ENCODE measurements at regions of chr7 and their contacts with region 1.

Region 1: DNA sequence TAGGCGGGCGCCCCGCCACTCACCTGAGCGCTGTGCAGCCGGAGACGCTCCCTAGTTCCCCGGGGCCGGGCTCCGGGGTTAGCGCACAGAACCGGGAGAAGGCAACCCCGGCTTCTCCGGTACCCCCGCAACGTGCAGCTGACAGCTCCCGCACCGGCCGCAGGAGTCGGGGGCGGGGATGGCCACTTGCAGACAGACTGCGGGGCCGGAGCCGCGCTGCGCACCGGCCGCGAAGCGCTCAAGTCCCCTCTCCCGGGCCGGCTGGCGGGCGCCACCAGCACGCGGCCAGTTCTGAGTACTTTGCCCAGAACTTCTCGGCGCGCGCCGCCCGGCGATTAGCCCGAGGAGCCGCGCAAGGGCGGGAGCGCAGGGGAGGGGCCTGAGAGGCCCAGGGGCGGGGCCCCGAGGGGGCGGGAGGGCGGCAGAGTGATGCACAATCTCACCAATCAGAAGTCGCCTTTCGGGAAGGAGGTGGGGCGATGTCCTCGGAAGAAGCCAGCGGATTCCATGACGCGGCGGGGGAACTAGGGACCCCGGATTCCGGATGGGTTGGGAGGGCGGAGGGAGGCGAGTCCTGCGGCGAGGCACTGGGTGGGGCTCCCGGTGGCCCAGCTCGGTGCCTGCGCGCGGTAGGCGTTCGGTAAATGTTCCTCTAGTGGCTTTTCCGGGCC is at the start of gene OSBPL3:
- DNase-seq: peak; percentile 96
- ATAC-seq: peak; percentile 84
- H3K4me3 Mint-ChIP-seq: peak within 1 kb of the TSS; percentile 90
- H3K27ac Mint-ChIP-seq: peak within 1 kb of the TSS; percentile 93
- H3K4me1 Mint-ChIP-seq: peaks cover 53% of the 10 kb centered on the region
- H3K27me3 Mint-ChIP-seq: no peaks in the 10 kb centered on the region
- total RNA-seq, gene OSBPL3: 34.7 to 38.2 TPM

Region 2: DNA sequence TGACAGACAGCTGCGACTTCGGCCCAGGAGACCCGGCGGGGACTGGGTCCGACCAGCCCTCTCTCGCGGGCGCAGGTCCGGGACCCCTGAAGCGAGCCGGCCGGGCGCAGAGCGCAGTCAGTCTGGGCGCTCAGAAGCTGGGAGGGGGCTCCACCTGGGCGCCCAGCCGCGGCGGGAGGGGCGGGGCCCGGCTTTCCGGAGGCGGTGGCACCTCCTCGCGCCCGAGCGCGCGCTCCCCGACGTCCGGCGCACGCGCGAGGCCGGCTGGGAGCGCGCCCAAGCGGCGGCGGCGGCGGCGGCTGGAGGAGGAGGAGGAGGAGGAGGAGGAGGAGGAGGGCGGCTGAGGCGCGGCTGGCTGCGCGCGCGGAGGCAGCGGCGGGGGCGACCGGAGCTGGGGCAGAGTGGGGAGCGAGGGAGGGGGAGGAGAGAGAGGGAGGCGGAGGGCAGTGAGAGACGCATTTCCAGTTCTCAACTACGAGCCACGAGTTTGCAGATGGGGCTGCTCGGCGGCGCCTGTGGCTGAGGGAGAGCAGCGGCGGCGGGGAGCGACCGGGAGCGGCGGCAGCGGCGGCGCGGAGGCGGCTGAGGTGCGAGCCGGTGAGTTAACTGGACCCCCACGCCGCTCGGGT is 406.9 kb before region 1 on chr7 and contains the start of gene PALS2:
- CTCF ChIA-PET with region 1: interaction called, 3 read pairs
- POLR2A ChIA-PET with region 1: no interaction called
- intact Hi-C with region 1: loop called in 1 of 2 experiments (anchors 1 kb)
- DNase-seq: peak; percentile 86
- ATAC-seq: peak; percentile 68
- H3K4me3 Mint-ChIP-seq: peak within 1 kb of the TSS; percentile 88
- H3K27ac Mint-ChIP-seq: peak within 1 kb of the TSS; percentile 86
- H3K4me1 Mint-ChIP-seq: peaks cover 34% of the 10 kb centered on the region
- H3K27me3 Mint-ChIP-seq: peaks cover 12% of the 10 kb centered on the region
- total RNA-seq, gene PALS2: 20.8 to 41.7 TPM

Region 3: DNA sequence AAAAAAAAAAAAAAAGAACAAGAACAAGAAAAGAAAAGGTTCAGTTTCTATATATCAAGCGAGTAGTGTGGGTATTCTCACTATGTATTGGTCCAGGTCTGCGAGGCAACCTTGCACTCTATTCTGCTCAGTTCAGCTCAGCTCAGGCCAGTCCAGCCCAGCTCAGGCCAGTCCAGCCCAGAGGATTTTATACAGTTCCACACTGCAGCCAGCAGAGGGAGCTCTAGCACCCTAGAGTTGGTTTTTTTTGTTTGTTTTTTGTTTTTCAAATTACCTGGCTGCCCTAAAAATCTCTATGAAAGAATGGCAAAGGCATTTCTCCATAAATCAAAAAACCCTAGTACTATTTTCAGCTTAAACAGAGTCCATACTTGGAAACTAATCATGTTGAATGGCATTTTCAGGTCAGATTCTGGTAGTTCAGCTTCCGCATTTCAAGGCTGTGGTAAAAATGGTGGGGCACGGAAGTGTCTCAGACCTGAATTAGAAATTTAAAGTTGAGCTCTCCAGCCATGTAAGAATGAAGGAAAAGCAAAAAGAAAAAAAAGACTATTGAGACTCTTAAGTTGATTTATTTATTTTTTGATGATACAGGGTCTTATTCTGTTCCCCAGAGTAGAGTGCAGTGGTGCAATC is 167.6 kb before region 1 on chr7:
- CTCF ChIA-PET with region 1: interaction called, 11 read pairs
- POLR2A ChIA-PET with region 1: no interaction called
- intact Hi-C with region 1: no loop called
- DNase-seq: peak; percentile 68
- ATAC-seq: peak; percentile 69
- H3K4me3 Mint-ChIP-seq: no peak overlapping the region
- H3K27ac Mint-ChIP-seq: no peak overlapping the region
- H3K4me1 Mint-ChIP-seq: no peaks in the 10 kb centered on the region
- H3K27me3 Mint-ChIP-seq: no peaks in the 10 kb centered on the region

Region 4: GRCh38 chr7:24907311-24907886 is 72.6 kb before region 1 on chr7:
- CTCF ChIA-PET with region 1: interaction called, 3 read pairs
- POLR2A ChIA-PET with region 1: no interaction called
- intact Hi-C with region 1: loop called (anchors 1 kb)
- DNase-seq: peak; percentile 47
- ATAC-seq: peak; percentile 85
- H3K4me3 Mint-ChIP-seq: no peak overlapping the region
- H3K27ac Mint-ChIP-seq: no peak overlapping the region
- H3K4me1 Mint-ChIP-seq: peaks cover 43% of the 10 kb centered on the region
- H3K27me3 Mint-ChIP-seq: no peaks in the 10 kb centered on the region

Region 5: GRCh38 chr7:25028370-25029021 is 48.5 kb after region 1 on chr7:
- CTCF ChIA-PET with region 1: interaction called, 4 read pairs
- POLR2A ChIA-PET with region 1: no interaction called
- intact Hi-C with region 1: loop called (anchors 1 to 2 kb)
- DNase-seq: peak; percentile 50
- ATAC-seq: peak; percentile 89
- H3K4me3 Mint-ChIP-seq: peak overlapping the region; percentile 41
- H3K27ac Mint-ChIP-seq: peak overlapping the region; percentile 87
- H3K4me1 Mint-ChIP-seq: peaks cover 46% of the 10 kb centered on the region
- H3K27me3 Mint-ChIP-seq: no peaks in the 10 kb centered on the region

Region 6: DNA sequence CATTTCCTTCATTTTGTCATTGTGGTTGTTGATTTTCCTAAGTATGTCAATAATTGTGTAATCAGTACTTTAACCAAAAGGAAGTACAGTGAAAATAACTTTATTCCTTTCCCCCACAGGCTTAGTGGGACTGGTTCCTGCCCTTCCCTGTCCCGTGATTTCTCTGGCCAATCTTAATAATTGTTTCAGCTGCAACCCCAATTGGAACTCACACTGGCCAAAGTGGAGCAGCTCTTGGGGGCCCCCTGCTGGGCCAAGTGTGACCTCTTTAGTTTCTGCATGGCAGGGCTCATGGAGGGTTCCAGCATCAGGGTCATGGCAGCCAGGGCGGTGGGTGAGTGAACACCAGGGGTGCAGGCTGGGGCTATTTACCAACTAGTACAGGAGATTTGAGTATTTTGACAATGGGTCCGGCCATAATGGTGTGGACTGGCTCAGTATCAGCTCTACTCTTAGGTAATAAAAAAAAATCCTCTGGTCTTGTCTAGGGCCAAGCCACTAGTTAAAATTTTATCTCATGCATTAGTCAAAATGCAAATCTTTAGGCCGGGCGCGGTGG is 113.3 kb after region 1 on chr7:
- CTCF ChIA-PET with region 1: interaction called, 13 read pairs
- POLR2A ChIA-PET with region 1: no interaction called
- intact Hi-C with region 1: loop called in 1 of 2 experiments (anchors 1 kb)
- DNase-seq: peak; percentile 90
- ATAC-seq: peak; percentile 91
- H3K4me3 Mint-ChIP-seq: no peak overlapping the region
- H3K27ac Mint-ChIP-seq: no peak overlapping the region
- H3K4me1 Mint-ChIP-seq: peaks cover 12% of the 10 kb centered on the region
- H3K27me3 Mint-ChIP-seq: peaks cover 2% of the 10 kb centered on the region

Region 7: GRCh38 chr7:25179771-25180591 is 200.0 kb after region 1 on chr7:
- CTCF ChIA-PET with region 1: interaction called, 3 read pairs
- POLR2A ChIA-PET with region 1: no interaction called
- intact Hi-C with region 1: loop called in 1 of 2 experiments (anchors 5 kb)
- DNase-seq: peak; percentile 97
- ATAC-seq: peak; percentile 95
- H3K4me3 Mint-ChIP-seq: peak overlapping the region; percentile 78
- H3K27ac Mint-ChIP-seq: peak overlapping the region; percentile 90
- H3K4me1 Mint-ChIP-seq: peaks cover 16% of the 10 kb centered on the region
- H3K27me3 Mint-ChIP-seq: no peaks in the 10 kb centered on the region